GM13976 (cell line): ENCODE measurements at regions of chr7 and their contacts with region 1.

Region 1: DNA sequence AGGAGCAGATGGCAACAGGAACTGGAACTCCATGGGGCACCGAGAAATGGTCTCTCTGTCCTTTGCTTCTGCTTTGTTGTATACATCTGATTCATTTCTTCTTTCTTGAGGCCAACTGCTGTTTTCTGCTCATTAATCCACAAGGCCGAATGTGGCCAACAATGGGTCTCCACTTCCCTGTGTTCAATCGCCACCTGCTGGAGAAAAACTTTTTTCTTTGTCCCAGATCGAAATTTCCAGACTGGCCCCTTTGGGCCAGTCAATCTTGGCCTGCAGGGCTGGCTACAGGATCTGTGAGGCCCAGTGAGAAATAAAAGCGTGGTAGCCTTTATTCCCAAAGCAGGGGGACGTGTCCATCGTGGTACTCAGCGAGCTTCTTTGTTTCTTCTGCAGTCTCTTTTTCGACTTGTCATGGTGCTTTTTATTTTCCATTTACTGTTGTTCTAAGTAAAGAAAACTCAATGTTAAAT is 58.8 kb downstream of the PARP12 start:
- DNase-seq: peak; percentile 78
- CTCF ChIP-seq: peak; percentile 16

Region 2: DNA sequence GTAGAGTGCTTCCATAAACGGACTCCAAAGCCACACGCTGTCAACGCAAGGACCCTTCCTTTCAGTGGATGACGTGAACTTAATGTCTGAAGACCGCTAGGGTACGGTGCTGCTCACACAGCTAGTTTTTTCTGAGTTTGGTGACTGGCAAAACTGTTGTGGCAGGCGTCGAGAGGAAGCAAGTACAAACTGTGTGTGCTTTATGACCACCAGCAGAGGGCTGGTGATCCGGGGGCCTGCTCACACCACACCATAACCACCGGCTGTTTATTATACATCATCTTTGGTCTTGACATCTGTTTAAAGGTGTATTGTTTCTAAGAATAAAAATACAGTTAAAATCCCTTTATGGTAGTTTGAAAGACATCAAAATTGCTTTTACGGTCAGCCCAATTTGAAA is 1168.9 kb before region 1 on chr7:
- in situ Hi-C with region 1: no loop called
- DNase-seq: no peak
- CTCF ChIP-seq: no peak

Region 3: GRCh38 chr7:139482662-139483469 is 521.1 kb before region 1 on chr7:
- in situ Hi-C with region 1: loop called (anchors 25 kb)
- DNase-seq: peak; percentile 49
- CTCF ChIP-seq: no peak

Region 4: GRCh38 chr7:139645572-139646523 is 358.1 kb before region 1 on chr7:
- in situ Hi-C with region 1: loop called (anchors 10 kb)
- DNase-seq: peak; percentile 68
- CTCF ChIP-seq: peak; percentile 82